Activated CD8-positive, alpha-beta T cell treated with anti-CD3 and anti-CD28 coated beads, Interleukin-2, amount 10 ng/mL, durations not matched to agents 7 days and 5 days (primary cell): ENCODE measurements at regions of chr12 and their contacts with region 1.

Region 1: GRCh38 chr12:121888478-121889266 is at the start of gene PSMD9:
- DNase-seq: peak; percentile 98
- ATAC-seq: peak; percentile 93
- H3K4me3 Mint-ChIP-seq: peak within 1 kb of the TSS; percentile 99
- H3K27ac Mint-ChIP-seq: peak within 1 kb of the TSS; percentile 100
- H3K4me1 Mint-ChIP-seq: peaks cover 44% of the 10 kb centered on the region
- H3K27me3 Mint-ChIP-seq: no peaks in the 10 kb centered on the region
- total RNA-seq, gene PSMD9: 62.3 to 70.6 TPM

Region 2: GRCh38 chr12:121839106-121839992 is 49.3 kb before region 1 on chr12:
- CTCF ChIA-PET with region 1: interaction called, 21 read pairs
- POLR2A ChIA-PET with region 1: no interaction called
- DNase-seq: peak; percentile 99
- ATAC-seq: peak; percentile 99
- H3K4me3 Mint-ChIP-seq: peak overlapping the region; percentile 99
- H3K27ac Mint-ChIP-seq: peak overlapping the region; percentile 96
- H3K4me1 Mint-ChIP-seq: peaks cover 22% of the 10 kb centered on the region
- H3K27me3 Mint-ChIP-seq: no peaks in the 10 kb centered on the region

Region 3: GRCh38 chr12:121849665-121850064 is 39.0 kb before region 1 on chr12:
- CTCF ChIA-PET with region 1: no interaction called
- POLR2A ChIA-PET with region 1: no interaction called
- DNase-seq: no peak
- ATAC-seq: no peak
- H3K4me3 Mint-ChIP-seq: no peak overlapping the region
- H3K27ac Mint-ChIP-seq: no peak overlapping the region
- H3K4me1 Mint-ChIP-seq: no peaks in the 10 kb centered on the region
- H3K27me3 Mint-ChIP-seq: no peaks in the 10 kb centered on the region

Region 4: DNA sequence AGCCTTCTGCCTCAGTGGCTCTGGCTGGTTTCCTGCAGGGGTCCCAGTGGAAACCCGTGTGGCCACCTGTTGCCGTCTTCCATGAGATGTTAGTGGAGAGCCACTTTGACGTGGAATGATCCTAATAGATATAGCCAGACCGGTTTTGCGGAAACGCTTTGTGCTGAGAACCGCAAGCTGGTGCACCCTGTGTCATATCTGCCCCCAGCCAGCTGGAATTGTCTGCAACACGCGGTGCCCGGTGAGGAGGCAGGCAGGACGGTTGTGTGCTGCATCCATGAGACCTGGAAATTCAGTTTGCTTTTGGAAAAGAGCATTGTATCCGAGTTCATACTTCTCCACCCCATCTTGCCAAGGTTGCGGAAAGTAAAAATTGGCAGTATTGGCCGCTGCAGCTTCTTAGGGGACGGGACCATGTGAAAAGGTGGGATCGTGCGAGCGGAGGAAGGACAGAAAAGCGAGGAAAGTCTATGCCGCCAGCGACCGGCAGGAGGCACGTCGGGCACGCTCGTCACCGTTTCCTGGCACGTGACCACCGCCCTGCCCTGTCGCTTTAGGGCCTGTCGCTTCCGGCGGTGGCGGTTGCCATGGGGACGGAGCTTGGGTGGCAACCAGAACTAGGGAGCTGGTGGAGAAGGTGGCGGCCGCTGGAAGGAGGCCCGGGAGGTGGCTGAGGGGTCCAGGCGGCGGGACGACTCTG is 29.5 kb after region 1 on chr12 and contains the start of gene CFAP251:
- CTCF ChIA-PET with region 1: interaction called, 11 read pairs
- POLR2A ChIA-PET with region 1: no interaction called
- DNase-seq: peak; percentile 97
- ATAC-seq: peak; percentile 96
- H3K4me3 Mint-ChIP-seq: peak within 1 kb of the TSS; percentile 64
- H3K27ac Mint-ChIP-seq: peak within 1 kb of the TSS; percentile 89
- H3K4me1 Mint-ChIP-seq: peaks cover 20% of the 10 kb centered on the region
- H3K27me3 Mint-ChIP-seq: no peaks in the 10 kb centered on the region
- total RNA-seq, gene CFAP251: 0.70 to 0.82 TPM